ENCODE measurements at regions of chr15 and their contacts with region 1.

Region 1: DNA sequence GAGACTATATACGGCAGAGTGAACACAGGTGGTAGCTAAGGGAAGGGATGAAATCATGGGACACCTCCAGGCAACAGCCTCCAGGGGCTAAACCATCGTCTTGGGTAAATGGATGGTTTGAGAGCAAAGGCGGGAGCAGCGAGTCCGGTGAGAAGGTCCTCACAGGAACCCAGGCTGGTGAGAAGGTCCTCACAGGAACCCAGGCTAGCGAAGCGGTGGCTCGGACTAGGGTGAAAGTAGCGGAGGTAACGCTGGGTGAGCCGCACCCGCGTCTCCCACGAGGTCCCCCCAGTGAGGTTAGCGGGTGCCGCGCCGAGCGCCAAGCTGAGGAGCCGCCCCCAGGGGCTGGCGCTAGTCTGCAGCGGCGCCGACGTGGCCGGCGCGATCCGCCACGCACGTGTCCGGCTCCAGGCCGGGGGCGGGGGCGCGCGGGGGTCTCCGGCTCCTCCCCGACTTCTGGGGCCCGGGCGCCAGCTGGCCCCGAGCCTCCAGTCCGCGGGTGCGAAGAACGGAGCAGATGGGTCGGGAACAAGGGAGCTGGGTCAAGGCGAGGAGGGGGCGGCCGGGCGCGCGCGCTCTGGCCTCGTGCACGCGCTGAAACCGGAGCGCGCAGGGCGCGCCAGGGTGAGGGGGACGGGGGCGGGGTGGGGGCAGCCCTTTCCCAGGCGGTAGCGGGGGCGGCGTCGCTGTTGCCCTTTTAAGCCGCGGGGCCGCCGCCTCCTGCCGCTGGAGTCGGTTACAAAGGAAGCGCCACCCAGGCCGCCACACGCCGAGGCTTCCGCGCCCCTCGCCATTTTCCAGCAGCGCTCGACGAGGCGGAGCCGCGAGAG is at the start of gene UBE2Q2:
- DNase-seq: peak; percentile 45 to 78 (median 67)
- ATAC-seq: peak; percentile 75
- H3K4me3 ChIP-seq: peak within 1 kb of the TSS; percentile 68
- H3K4me3 Mint-ChIP-seq: peak within 1 kb of the TSS; percentile 85 to 99 (median 96)
- H3K27ac ChIP-seq: peak within 1 kb of the TSS; percentile 76
- H3K27ac Mint-ChIP-seq: peak within 1 kb of the TSS; percentile 85 to 97 (median 92)
- H3K4me1 ChIP-seq: peaks cover 20 to 30% of the 10 kb centered on the region in 2 donors
- H3K4me1 Mint-ChIP-seq: peaks cover 37 to 50% (median 45%) of the 10 kb centered on the region in 7 donors
- H3K27me3 ChIP-seq: no peaks in the 10 kb centered on the region
- H3K27me3 Mint-ChIP-seq: peaks cover 0 to 20% (median 0%) of the 10 kb centered on the region in 5 donors
- total RNA-seq, gene UBE2Q2: 28.2 to 32.1 (median 28.8) TPM

Region 2: DNA sequence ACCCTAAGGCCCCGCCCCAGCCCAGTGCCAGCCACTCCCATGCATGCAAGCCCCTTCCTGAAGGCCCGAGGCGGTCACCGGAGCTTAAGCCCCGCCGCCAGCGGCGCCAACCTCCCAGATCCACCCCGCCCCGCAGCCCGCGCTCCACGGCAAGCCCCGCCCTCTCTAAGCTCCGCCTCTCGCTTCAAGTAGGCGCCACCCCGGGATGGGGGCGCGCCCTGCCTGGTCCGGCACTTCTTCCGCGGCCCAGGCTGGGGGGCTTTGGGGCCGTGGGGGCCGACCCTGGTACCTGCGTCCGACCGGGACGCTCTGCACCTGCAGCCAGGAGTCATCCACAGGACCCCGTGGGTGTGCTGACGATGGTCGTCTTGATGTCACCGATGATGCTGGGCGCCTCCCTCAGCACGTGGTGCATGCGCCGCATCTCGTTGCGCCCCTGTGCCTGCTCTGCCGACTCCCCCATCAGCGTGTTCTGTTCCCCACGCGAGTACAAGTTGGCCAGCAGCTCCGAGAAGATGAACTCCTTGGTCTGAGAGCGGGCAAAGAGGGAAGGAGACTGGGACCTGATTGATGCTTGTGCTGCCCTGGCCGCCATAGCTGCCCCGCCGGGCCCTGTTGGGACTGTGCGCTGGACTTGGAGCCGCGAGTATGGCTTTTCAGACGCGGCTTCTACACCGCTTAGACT is 104.1 kb before region 1 on chr15:
- CTCF ChIA-PET with region 1: no interaction called
- POLR2A ChIA-PET with region 1: no interaction called
- intact Hi-C with region 1: loop called (anchors 1 to 2 kb)
- DNase-seq: peak; percentile 81 to 92 (median 88)
- ATAC-seq: peak; percentile 97
- H3K4me3 ChIP-seq: peak overlapping the region; percentile 84
- H3K4me3 Mint-ChIP-seq: peak overlapping the region; percentile 83 to 94 (median 88)
- H3K27ac ChIP-seq: peak overlapping the region; percentile 58
- H3K27ac Mint-ChIP-seq: peak overlapping the region in 7 of 9 donors; percentile 51 to 86 (median 80)
- H3K4me1 ChIP-seq: peaks cover 0 to 6% of the 10 kb centered on the region in 2 donors
- H3K4me1 Mint-ChIP-seq: peaks cover 4 to 15% (median 12%) of the 10 kb centered on the region in 7 donors
- H3K27me3 ChIP-seq: no peaks in the 10 kb centered on the region
- H3K27me3 Mint-ChIP-seq: peaks cover 0 to 41% (median 0%) of the 10 kb centered on the region in 5 donors

Region 3: GRCh38 chr15:75758071-75758872 is 84.7 kb before region 1 on chr15:
- CTCF ChIA-PET with region 1: no interaction called
- POLR2A ChIA-PET with region 1: interaction called, 3 read pairs
- intact Hi-C with region 1: loop called in 1 of 2 experiments (anchors 5 kb)
- DNase-seq: peak; percentile 31 to 71 (median 39)
- ATAC-seq: peak; percentile 90
- H3K4me3 ChIP-seq: peak overlapping the region; percentile 64
- H3K4me3 Mint-ChIP-seq: peak overlapping the region; percentile 83 to 92 (median 87)
- H3K27ac ChIP-seq: peak overlapping the region; percentile 82
- H3K27ac Mint-ChIP-seq: peak overlapping the region; percentile 68 to 95 (median 88)
- H3K4me1 ChIP-seq: peaks cover 0 to 4% of the 10 kb centered on the region in 2 donors
- H3K4me1 Mint-ChIP-seq: peaks cover 6 to 20% (median 16%) of the 10 kb centered on the region in 7 donors
- H3K27me3 ChIP-seq: no peaks in the 10 kb centered on the region
- H3K27me3 Mint-ChIP-seq: peaks cover 0 to 5% (median 0%) of the 10 kb centered on the region in 5 donors

Region 4: DNA sequence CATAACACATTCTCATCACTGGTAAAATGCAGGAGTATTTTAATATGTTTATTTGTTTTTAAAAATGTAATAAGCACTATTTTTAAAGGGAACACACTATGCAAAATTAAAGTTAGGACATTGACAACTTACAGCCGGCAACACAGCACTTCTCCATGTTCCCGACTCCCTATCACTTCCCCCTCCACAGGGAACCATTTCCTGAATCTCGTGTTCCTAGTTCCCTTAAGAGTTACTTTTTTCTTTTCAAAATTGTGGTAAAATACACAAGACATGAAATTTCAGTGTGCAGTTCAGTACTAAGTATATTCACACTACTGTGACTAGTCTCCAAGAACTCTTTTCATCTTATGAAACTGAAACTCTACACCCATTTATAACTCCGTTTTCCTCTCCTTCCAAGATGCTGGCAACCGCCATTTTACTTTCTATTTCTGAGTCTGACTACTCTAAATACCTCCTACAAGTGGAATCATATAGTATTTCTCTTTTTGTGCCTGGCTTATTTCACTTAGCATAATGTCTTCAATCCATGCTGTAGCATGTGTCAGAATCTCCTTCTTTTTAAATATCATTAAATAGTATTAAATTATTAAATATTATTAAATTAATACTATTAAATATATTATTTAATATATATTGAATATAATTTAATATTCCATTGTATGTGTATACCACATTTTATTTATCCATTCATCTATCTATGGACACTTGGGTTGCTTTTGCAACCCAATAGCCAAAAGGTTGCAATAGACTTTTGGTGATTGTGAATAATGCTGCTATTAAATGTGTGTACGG is 25.6 kb before region 1 on chr15:
- CTCF ChIA-PET with region 1: no interaction called
- POLR2A ChIA-PET with region 1: interaction called, 3 read pairs
- intact Hi-C with region 1: loop called in 1 of 2 experiments (anchors 2 kb)
- DNase-seq: peak in 2 of 9 donors; percentile 4 to 18
- ATAC-seq: peak; percentile 65
- H3K4me3 ChIP-seq: no peak overlapping the region
- H3K4me3 Mint-ChIP-seq: peak overlapping the region in 5 of 10 donors; percentile 14 to 85 (median 30)
- H3K27ac ChIP-seq: no peak overlapping the region
- H3K27ac Mint-ChIP-seq: peak overlapping the region in 4 of 9 donors; percentile 4 to 89 (median 57)
- H3K4me1 ChIP-seq: peaks cover 0 to 9% of the 10 kb centered on the region in 2 donors
- H3K4me1 Mint-ChIP-seq: peaks cover 9 to 31% (median 11%) of the 10 kb centered on the region in 7 donors
- H3K27me3 ChIP-seq: peaks cover 0 to 3% of the 10 kb centered on the region in 2 donors
- H3K27me3 Mint-ChIP-seq: no peaks in the 10 kb centered on the region

Region 5: DNA sequence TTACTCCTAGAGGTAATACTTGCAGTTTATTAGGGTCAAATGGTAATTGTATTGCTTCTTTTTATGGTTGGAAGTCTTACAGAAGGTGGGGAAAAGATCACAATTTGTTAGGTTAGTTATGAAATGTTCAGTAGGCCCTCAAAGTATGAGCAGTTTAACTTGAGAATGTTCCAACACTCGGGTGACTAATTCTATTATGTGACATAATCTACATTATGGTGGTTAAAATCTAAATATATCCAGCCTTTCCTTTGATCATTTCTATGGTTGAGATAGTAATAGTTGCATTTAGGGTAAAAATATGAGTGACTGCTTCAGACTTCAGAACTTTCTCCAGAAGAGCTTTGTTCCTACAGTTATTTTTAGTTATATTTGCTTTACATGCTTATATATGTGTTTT is 41.1 kb after region 1 on chr15:
- CTCF ChIA-PET with region 1: no interaction called
- POLR2A ChIA-PET with region 1: interaction called, 6 read pairs
- intact Hi-C with region 1: loop called in 1 of 2 experiments (anchors 5 kb)
- DNase-seq: no peak
- ATAC-seq: no peak
- H3K4me3 ChIP-seq: no peak overlapping the region
- H3K4me3 Mint-ChIP-seq: no peak overlapping the region
- H3K27ac ChIP-seq: no peak overlapping the region
- H3K27ac Mint-ChIP-seq: peak overlapping the region in 1 of 9 donors; percentile 41
- H3K4me1 ChIP-seq: no peaks in the 10 kb centered on the region
- H3K4me1 Mint-ChIP-seq: peaks cover 0 to 9% (median 2%) of the 10 kb centered on the region in 7 donors
- H3K27me3 ChIP-seq: no peaks in the 10 kb centered on the region
- H3K27me3 Mint-ChIP-seq: no peaks in the 10 kb centered on the region

Region 6: DNA sequence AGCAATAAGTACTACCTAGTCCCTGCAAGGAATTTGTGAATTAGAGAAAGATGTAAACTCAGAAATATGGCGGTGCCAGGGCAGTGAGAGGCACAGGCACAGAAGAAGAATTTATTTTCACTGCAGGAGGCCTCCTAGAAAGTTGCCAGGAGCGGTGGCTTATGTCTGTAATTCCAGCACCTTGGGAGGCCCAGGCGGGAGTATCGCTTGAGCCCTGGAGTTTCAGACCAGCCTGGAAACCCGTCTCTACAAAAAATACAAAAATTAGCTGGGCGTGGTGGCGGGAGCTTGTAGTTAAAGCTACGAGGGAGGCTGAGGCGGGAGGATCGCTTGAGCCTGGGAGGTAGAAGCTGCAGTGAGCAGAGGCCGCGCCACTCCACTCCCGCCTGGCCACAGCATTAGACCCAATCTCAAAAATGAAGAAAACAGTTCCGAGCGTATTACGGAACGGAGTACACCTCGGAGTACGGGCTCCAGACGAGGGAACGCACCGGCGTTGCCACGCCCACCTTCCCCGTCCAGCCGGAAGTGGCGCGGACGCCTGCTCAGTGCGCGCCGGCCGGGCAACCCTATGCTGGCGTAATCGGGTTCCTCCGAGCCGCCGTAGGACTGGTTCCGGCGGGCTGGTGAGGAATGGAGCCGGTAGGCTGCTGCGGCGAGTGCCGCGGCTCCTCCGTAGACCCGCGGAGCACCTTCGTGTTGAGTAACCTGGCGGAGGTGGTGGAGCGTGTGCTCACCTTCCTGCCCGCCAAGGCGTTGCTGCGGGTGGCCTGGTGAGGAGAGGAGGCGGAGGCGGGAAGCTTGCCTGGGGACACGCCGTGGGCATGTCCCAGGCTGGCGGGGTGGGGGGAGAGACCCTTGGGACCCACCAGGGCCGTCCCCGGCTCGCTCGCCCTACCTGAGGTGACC is 60.6 kb after region 1 on chr15 and contains the start of gene FBXO22:
- CTCF ChIA-PET with region 1: no interaction called
- POLR2A ChIA-PET with region 1: interaction called, 22 read pairs
- intact Hi-C with region 1: loop called (anchors 1 kb)
- DNase-seq: peak; percentile 79 to 92 (median 85)
- ATAC-seq: peak; percentile 98
- H3K4me3 ChIP-seq: peak within 1 kb of the TSS; percentile 91
- H3K4me3 Mint-ChIP-seq: peak within 1 kb of the TSS; percentile 96 to 99 (median 98)
- H3K27ac ChIP-seq: peak within 1 kb of the TSS; percentile 79
- H3K27ac Mint-ChIP-seq: peak within 1 kb of the TSS; percentile 91 to 97 (median 94)
- H3K4me1 ChIP-seq: peaks cover 0 to 12% of the 10 kb centered on the region in 2 donors
- H3K4me1 Mint-ChIP-seq: peaks cover 15 to 70% (median 51%) of the 10 kb centered on the region in 7 donors
- H3K27me3 ChIP-seq: no peaks in the 10 kb centered on the region
- H3K27me3 Mint-ChIP-seq: no peaks in the 10 kb centered on the region
- total RNA-seq, gene FBXO22: 9.7 to 34.5 (median 25.5) TPM

Measured in naive thymus-derived CD4-positive, alpha-beta T cell (primary cell).